Ascending aorta (tissue), 2 donors: ENCODE measurements at regions of chr18 and their contacts with region 1.

Region 1: DNA sequence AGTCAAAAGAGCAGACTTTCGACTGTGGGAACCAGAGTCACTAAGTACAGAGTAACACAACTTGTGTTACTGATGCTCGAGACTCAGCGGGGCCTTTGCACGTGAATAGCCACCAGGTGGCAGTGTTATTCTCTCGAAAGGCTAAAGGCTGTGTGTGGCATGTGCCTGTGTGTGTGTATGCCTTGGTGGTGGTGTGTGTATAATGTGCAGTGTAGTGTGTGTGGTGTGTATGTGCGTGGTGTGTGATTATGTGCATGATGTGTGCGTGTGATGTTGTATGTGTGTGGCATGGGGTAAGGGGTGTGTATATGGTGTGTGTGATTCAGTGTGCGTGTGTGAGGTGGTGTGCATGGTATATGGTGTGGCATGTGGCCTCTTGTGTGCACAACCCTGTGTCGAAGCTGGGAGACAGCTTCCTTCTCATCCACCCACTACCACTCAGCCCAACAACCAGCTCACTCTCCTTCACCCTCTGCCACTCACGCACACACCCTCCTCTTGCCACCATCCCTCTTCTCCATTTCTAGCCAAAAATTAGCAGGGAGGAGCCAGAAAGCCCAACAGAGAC is 83.0 kb upstream of the ZNF532 start:
- DNase-seq: peak; percentile 46 to 90
- H3K4me3 ChIP-seq: no peak overlapping the region
- H3K27ac ChIP-seq: peak overlapping the region; percentile 24 to 63
- H3K4me1 ChIP-seq: peaks cover 13 to 21% of the 10 kb centered on the region in 2 donors
- H3K27me3 ChIP-seq: no peaks in the 10 kb centered on the region
- CTCF ChIP-seq: peak; percentile 82 to 95 (median 92)

Region 2: DNA sequence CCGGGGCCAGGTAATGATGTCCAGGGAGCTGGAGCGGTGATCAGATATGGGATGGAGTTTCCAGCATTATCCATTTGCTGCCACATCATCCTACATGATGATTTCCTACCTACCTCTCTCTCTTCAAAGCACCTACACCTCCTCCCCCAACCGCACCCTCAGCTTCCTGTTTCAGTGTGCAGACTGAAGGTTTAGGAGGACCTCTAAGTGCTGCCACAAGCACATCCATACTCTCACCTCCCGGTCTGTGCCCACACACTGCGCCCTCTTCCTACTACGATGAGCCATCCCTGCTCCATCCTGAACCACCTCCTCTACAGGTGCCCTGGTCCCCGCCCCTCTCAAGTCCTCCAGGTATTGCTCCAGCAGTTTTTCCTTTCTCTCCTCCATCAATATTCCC is 276.5 kb before region 1 on chr18:
- intact Hi-C with region 1: no loop called
- DNase-seq: no peak
- H3K4me3 ChIP-seq: no peak overlapping the region
- H3K27ac ChIP-seq: no peak overlapping the region
- H3K4me1 ChIP-seq: no peaks in the 10 kb centered on the region
- H3K27me3 ChIP-seq: no peaks in the 10 kb centered on the region
- CTCF ChIP-seq: no peak

Region 3: GRCh38 chr18:58792086-58792485 is 10.4 kb after region 1 on chr18:
- intact Hi-C with region 1: no loop called
- DNase-seq: no peak
- H3K4me3 ChIP-seq: no peak overlapping the region
- H3K27ac ChIP-seq: no peak overlapping the region
- H3K4me1 ChIP-seq: peaks cover 0 to 3% of the 10 kb centered on the region in 2 donors
- H3K27me3 ChIP-seq: no peaks in the 10 kb centered on the region
- CTCF ChIP-seq: no peak

Region 4: DNA sequence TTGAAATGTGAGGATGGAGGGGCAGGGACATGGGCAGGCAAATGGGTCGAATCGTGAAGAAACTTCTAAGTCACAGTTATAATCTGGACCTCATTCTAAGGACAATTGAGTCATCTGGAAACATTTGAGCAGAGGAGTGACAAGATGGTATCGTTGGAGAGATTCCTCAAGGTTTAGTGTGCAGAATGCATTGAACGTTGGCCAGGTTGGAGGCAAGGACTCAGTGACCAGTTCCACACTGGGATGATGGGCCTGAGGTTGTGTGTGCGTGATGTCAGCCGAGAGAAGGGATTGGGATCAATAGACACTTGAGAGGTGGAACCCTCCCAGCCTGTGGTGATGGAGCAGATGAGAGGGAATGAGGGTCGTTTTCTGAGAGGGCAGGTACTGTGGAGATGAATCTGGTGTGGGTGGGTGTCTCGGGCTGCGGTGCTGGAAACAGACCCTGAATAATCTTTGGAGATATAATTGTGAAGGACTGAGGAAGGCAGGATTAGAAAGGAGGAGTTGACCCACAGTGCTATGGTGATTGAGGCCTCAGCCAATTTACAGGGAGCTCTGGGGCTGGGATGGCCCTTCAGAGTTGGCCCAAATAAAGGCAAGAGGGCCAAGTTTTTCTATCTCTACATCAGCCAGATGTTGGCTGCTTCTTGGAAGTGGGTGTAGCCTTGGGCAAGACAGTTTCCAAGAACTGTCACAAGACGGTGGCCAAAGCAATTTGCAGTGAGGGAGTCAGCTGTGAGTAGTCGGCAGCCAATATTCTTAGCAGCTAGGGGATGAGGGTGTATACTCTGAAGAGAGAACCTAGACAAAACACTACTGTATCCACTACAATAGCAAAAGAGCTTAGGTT is 77.1 kb after region 1 on chr18:
- intact Hi-C with region 1: loop called (anchors 5 kb)
- DNase-seq: peak in 1 of 2 donors; percentile 79
- H3K4me3 ChIP-seq: no peak overlapping the region
- H3K27ac ChIP-seq: peak overlapping the region; percentile 86 to 100
- H3K4me1 ChIP-seq: peaks cover 7 to 39% of the 10 kb centered on the region in 2 donors
- H3K27me3 ChIP-seq: no peaks in the 10 kb centered on the region
- CTCF ChIP-seq: no peak

Region 5: DNA sequence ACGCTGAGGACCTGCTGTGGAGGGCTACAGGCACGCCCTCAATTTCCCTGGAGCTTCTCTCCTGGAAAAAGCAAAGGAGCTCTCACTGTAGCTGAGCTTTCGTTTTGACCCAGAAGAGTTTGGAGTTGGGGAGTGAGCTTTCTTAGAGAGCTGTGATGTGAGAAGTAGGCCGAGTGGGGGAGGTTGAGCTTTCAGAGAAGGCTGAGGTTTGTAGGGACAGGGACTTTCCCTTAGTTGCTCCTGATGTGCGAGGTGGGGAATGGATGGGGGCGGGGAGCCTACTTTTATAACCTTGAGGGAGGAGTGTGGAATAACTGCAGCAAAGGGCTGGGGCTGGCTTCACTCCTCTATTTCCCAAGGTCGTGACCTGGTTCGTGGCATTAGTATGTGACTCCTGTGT is 130.1 kb after region 1 on chr18:
- intact Hi-C with region 1: no loop called
- DNase-seq: no peak
- H3K4me3 ChIP-seq: peak overlapping the region; percentile 3 to 26
- H3K27ac ChIP-seq: peak overlapping the region; percentile 92 to 98
- H3K4me1 ChIP-seq: peaks cover 3 to 66% of the 10 kb centered on the region in 2 donors
- H3K27me3 ChIP-seq: no peaks in the 10 kb centered on the region
- CTCF ChIP-seq: no peak

Region 6: GRCh38 chr18:58975296-58975695 is 193.6 kb after region 1 on chr18:
- intact Hi-C with region 1: loop called (anchors 5 kb)
- DNase-seq: no peak
- H3K4me3 ChIP-seq: peak overlapping the region in 1 of 2 donors; percentile 28
- H3K27ac ChIP-seq: peak overlapping the region; percentile 78 to 80
- H3K4me1 ChIP-seq: peaks cover 8 to 35% of the 10 kb centered on the region in 2 donors
- H3K27me3 ChIP-seq: no peaks in the 10 kb centered on the region
- CTCF ChIP-seq: no peak

Region 7: DNA sequence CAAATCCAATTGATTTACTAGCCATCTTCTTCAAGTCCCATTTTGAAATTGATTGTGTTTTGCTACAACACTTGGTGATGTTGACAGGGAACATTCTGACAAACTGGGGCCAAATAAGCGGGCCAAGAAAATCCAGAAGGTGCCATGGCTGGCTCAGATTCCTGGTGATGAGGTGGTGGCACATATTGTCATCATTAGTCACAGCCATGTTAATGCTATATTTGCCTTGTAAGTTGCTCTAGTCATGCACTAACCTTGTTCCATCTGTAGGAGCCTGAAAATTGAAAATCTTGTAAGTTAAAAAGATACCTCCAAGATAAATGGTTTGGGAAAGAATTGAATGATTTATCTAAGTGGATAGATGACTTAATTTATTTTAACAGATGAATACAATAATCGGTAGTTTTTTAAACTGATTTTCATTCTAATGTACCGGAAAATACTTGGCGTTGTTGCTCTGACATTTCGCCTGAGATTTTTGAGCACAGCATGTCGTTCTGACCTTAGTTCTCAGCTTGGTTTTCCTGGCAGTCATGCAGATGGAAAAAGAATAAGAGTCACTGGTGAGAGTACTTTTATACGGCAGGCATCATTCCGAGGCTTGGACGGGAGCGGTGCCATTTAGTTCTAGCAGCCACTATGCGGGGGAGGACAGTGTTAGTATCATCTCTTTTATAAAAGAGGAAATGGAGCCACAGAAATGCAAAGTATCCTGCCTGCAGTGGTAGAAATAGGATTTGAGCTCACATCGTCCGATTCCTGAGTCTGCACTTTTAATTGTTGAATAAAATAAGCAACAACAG is 216.9 kb after region 1 on chr18:
- intact Hi-C with region 1: loop called (anchors 5 kb)
- DNase-seq: peak in 1 of 2 donors; percentile 91
- H3K4me3 ChIP-seq: peak overlapping the region in 1 of 2 donors; percentile 12
- H3K27ac ChIP-seq: peak overlapping the region; percentile 93 to 95
- H3K4me1 ChIP-seq: peaks cover 9 to 37% of the 10 kb centered on the region in 2 donors
- H3K27me3 ChIP-seq: no peaks in the 10 kb centered on the region
- CTCF ChIP-seq: peak in 1 of 3 experiments; percentile 41

Region 8: GRCh38 chr18:59056706-59057492 is 275.2 kb after region 1 on chr18:
- intact Hi-C with region 1: loop called (anchors 1 kb)
- DNase-seq: peak in 1 of 2 donors; percentile 85
- H3K4me3 ChIP-seq: no peak overlapping the region
- H3K27ac ChIP-seq: peak overlapping the region; percentile 63 to 83
- H3K4me1 ChIP-seq: peaks cover 9 to 33% of the 10 kb centered on the region in 2 donors
- H3K27me3 ChIP-seq: no peaks in the 10 kb centered on the region
- CTCF ChIP-seq: peak; percentile 73 to 78 (median 78)

Region 9: DNA sequence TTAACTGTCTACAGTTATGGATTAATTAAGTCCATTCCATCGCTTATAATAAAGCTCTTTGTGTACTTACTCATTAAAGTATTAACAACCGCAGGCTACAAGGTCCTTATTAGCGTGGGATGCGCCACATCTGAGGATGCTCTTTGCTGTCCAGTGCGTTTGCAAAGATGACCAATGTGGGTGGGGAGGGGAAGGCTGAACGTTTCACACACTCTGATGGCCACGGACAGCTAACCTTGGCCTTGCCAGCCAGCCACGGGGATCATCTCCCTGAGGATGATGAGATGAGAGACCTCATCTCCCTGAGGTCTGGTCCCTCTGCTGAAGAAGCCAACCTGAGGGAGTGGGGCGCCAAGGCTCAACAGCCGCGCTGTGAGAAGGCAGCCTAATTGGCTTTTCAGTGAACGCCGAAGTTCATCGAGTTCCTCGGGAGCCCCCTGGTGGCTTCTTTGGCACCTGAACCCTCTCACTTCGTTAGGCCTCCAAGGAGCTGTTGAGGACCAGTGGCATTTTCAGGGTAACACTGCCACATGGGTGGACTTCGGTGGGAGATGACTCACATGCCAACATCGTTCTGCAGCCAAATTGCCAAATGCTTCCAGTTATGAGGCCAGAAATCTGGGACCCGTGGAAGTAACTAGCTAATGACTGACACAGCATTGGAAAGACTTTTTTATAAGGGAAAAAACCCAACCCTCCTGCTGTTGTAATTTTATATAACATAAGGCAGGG is 288.6 kb after region 1 on chr18:
- intact Hi-C with region 1: loop called (anchors 1 kb)
- DNase-seq: peak in 1 of 2 donors; percentile 92
- H3K4me3 ChIP-seq: no peak overlapping the region
- H3K27ac ChIP-seq: no peak overlapping the region
- H3K4me1 ChIP-seq: no peaks in the 10 kb centered on the region
- H3K27me3 ChIP-seq: no peaks in the 10 kb centered on the region
- CTCF ChIP-seq: peak; percentile 73 to 87 (median 76)

Region 10: GRCh38 chr18:59172664-59173249 is 391.0 kb after region 1 on chr18:
- intact Hi-C with region 1: no loop called
- DNase-seq: no peak
- H3K4me3 ChIP-seq: no peak overlapping the region
- H3K27ac ChIP-seq: no peak overlapping the region
- H3K4me1 ChIP-seq: no peaks in the 10 kb centered on the region
- H3K27me3 ChIP-seq: no peaks in the 10 kb centered on the region
- CTCF ChIP-seq: no peak